ENCODE measurements at regions of chr7 and their contacts with region 1.

Region 1: DNA sequence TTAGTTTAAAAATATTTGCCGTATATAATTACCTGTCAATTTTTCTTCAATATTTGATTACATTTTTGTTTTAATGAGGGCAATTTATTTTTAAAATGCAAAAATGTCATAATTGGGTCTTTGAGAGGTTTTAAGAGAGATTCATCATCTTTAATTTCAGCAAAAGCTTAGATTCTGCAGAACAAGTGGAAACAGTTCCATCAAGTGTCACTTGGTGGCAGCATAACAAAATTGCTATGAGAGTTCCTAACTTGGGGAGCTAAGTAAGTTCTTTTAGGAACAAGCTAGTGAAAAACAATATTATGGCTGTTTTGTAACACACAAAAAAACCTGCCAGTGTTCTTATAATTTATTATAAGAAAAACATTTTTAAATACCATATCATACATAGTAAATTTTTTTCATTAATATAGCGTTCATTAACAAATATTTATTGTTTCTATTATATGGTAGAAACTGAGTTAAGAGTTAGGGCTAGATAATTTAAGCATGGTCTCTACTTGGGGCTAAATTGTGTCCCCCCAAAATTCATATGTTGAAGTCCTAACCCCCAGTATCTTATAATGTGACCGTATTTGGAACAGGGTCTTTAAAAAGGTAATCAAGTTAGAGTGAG is 155.2 kb downstream of the MAGI2 start:
- DNase-seq: peak; percentile 55
- H3K4me3 ChIP-seq: no peak overlapping the region
- H3K27ac ChIP-seq: no peak overlapping the region
- H3K4me1 ChIP-seq: no peaks in the 10 kb centered on the region; a peak in 1 of 4 replicates
- H3K27me3 ChIP-seq: no peaks in the 10 kb centered on the region
- CTCF ChIP-seq: peak; percentile 97
- EP300 ChIP-seq: no peak
- RAD21 ChIP-seq: peak; percentile 92

Region 2: GRCh38 chr7:79090543-79090942 is 207.7 kb before region 1 on chr7:
- CTCF ChIA-PET with region 1: no interaction called
- POLR2A ChIA-PET with region 1: no interaction called
- DNase-seq: no peak
- H3K4me3 ChIP-seq: no peak overlapping the region
- H3K27ac ChIP-seq: 0 out of 4 replicates have a peak overlapping the region, but pooled peaks of 1 of the 2 experiments have one; percentile 30
- H3K4me1 ChIP-seq: peaks cover 0 to 12% of the 10 kb centered on the region in 2 experiments; a peak in 2 of 4 replicates
- H3K27me3 ChIP-seq: no peaks in the 10 kb centered on the region
- CTCF ChIP-seq: no peak
- EP300 ChIP-seq: peak in 1 of 2 experiments; percentile 68; a peak in 2 of 4 replicates
- RAD21 ChIP-seq: no peak

Region 3: DNA sequence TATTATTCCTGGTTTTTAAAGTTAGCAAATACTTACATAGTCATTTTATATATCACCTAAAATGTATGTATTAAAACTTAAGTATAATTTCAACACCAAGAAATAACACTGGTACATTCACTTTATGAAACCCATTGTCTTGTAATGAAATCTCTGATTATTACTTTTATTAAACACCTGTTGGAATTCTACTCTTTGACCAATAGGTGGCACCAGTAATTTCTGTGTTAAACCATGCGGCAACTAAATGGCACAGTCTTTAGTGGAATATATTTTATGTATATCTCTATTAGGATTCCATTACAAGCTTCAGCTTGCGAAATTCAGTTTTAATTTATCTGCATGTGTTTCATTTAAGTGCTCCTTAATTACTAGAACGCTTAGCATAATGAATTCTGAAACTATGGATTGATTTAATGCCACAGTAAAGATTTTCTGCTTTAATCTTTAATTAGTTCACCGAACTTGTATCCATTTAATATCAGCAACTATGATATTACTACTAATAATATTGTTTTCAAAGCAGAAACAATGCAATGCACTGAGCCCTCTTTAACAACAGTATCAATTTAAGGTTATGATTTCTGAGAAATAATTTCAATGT is 26.1 kb before region 1 on chr7:
- CTCF ChIA-PET with region 1: interaction called, 11 read pairs
- POLR2A ChIA-PET with region 1: no interaction called
- DNase-seq: peak; percentile 41
- H3K4me3 ChIP-seq: no peak overlapping the region
- H3K27ac ChIP-seq: no peak overlapping the region
- H3K4me1 ChIP-seq: no peaks in the 10 kb centered on the region; a peak in 1 of 4 replicates
- H3K27me3 ChIP-seq: no peaks in the 10 kb centered on the region
- CTCF ChIP-seq: peak; percentile 94
- EP300 ChIP-seq: no peak
- RAD21 ChIP-seq: peak; percentile 78

Region 4: DNA sequence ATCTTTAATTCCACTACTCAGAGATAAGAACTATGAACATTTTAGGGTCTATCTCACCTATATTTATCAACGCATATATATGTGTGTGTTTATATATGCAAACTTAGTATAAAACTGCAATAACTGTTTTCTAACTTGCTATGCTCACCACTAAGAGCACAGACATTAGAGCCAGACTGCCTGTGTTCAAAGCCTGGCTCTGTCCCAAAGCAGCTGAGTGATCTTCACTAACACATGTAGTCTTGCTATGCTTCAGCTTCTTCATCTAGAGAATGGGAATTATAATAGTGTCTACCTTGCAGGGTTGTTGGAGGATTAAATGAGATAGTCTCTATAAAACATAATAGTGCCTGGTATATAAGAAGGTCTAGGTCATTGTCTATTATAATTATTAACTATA is 10.3 kb before region 1 on chr7:
- CTCF ChIA-PET with region 1: interaction called, 33 read pairs
- POLR2A ChIA-PET with region 1: no interaction called
- DNase-seq: no peak
- H3K4me3 ChIP-seq: no peak overlapping the region
- H3K27ac ChIP-seq: no peak overlapping the region
- H3K4me1 ChIP-seq: peaks cover 0 to 14% of the 10 kb centered on the region in 2 experiments; a peak in 3 of 4 replicates
- H3K27me3 ChIP-seq: no peaks in the 10 kb centered on the region
- CTCF ChIP-seq: no peak
- EP300 ChIP-seq: no peak
- RAD21 ChIP-seq: no peak

Region 5: GRCh38 chr7:79347351-79347750 is 49.1 kb after region 1 on chr7:
- CTCF ChIA-PET with region 1: interaction called, 10 read pairs
- POLR2A ChIA-PET with region 1: no interaction called
- DNase-seq: no peak
- H3K4me3 ChIP-seq: no peak overlapping the region
- H3K27ac ChIP-seq: no peak overlapping the region; a peak in 1 of 4 replicates
- H3K4me1 ChIP-seq: no peaks in the 10 kb centered on the region; a peak in 1 of 4 replicates
- H3K27me3 ChIP-seq: no peaks in the 10 kb centered on the region
- CTCF ChIP-seq: no peak
- EP300 ChIP-seq: no peak
- RAD21 ChIP-seq: no peak

Region 6: DNA sequence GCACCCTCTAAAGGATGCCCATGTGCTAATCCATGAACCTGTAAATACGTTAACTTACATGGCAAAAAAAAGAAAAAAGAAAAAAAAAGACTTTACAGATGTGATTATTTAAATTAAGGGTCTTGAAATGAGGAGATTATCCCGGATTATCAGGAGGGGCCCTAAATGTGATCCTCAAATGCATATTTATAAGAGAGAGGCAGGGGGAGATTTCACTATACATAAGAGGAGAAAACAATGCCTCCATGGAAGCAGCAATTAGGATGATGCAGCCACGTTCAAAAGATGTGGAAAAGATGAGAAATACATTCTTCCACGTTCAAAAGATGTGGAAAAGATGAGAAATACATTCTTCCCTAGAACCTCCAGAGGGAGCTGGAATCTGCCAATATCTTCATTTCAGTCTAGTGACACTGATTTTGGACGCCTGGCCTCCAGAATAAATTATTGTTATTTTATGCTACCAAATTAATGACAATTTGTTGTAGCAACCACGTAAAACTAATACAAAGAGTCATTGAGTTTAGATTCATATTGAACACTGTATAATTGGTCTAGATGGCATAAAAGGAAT is 508.0 kb after region 1 on chr7:
- CTCF ChIA-PET with region 1: interaction called, 12 read pairs
- POLR2A ChIA-PET with region 1: no interaction called
- DNase-seq: no peak
- H3K4me3 ChIP-seq: no peak overlapping the region
- H3K27ac ChIP-seq: no peak overlapping the region
- H3K4me1 ChIP-seq: no peaks in the 10 kb centered on the region; a peak in 2 of 4 replicates
- H3K27me3 ChIP-seq: no peaks in the 10 kb centered on the region
- CTCF ChIP-seq: peak; percentile 67
- EP300 ChIP-seq: no peak
- RAD21 ChIP-seq: peak; percentile 89

Region 7: DNA sequence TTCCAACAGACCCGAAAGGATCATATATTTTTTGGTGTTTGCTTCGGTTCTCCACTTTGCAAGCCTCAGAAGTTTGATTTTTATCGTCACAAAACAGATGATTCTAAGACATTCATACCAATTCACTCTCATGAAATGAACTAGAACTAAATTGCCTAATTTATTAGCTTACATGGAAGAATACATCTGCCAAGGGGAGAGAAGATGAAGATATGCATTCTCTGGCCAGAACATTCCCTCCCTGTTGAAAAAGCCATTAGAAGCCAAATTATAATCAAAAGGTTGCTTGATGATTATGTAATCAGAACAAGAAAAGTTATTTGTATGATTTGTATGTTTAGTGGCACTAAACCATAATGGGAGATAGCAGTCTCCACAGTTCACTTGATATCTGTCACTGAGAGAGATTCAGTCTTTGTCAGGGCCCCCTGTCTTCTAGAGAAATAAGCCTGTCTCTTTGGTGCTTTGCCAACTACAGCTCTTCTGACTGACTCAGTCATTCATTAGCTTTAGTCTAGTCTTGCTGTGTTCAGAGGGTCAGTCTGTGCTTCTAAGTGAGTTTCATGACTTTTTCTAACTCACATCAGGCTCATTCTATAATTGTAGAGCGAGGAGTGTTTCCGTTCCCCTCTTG is 741.1 kb after region 1 on chr7:
- CTCF ChIA-PET with region 1: interaction called, 92 read pairs
- POLR2A ChIA-PET with region 1: no interaction called
- DNase-seq: no peak
- H3K4me3 ChIP-seq: no peak overlapping the region
- H3K27ac ChIP-seq: no peak overlapping the region; a peak in 1 of 4 replicates
- H3K4me1 ChIP-seq: no peaks in the 10 kb centered on the region; a peak in 1 of 4 replicates
- H3K27me3 ChIP-seq: no peaks in the 10 kb centered on the region
- CTCF ChIP-seq: no peak
- EP300 ChIP-seq: no peak
- RAD21 ChIP-seq: no peak

Measured in SK-N-SH (cell line).